GM12878 (cell line): ENCODE measurements at regions of chr9 and their contacts with region 1.

Region 1: GRCh38 chr9:89318123-89319014 is at the start of gene SECISBP2:
- DNase-seq: peak; percentile 79
- ATAC-seq: peak; percentile 92
- H3K4me3 ChIP-seq: peak within 1 kb of the TSS; percentile 74
- H3K27ac ChIP-seq: peak within 1 kb of the TSS; percentile 98
- H3K4me1 ChIP-seq: peaks cover 8% of the 10 kb centered on the region
- H3K27me3 ChIP-seq: no peaks in the 10 kb centered on the region
- CTCF ChIP-seq: peak; percentile 63 to 74 (median 72); a peak in 5 of 6 replicates
- EP300 ChIP-seq: peak; percentile 9 to 14; a peak in 2 of 4 replicates
- POLR2A ChIP-seq: peak; percentile 97
- RAD21 ChIP-seq: no peak; the same call in 1 of the 2 replicates
- polyA plus RNA-seq, gene SECISBP2: 4.6 to 6.6 TPM

Region 2: GRCh38 chr9:89340332-89340731 is 22.0 kb after region 1 on chr9:
- CTCF ChIA-PET with region 1: interaction called, 7 read pairs
- POLR2A ChIA-PET with region 1: interaction called, 4 read pairs
- RAD21 ChIA-PET with region 1: interaction called, 4 read pairs
- SMC1A ChIA-PET with region 1: interaction called, 20 read pairs
- in situ Hi-C with region 1: no loop called
- intact Hi-C with region 1: loop called (anchors 2 kb)
- DNase-seq: peak; percentile 45
- ATAC-seq: peak; percentile 97
- H3K4me3 ChIP-seq: peak overlapping the region; percentile 37; the same call in 1 of the 2 replicates
- H3K27ac ChIP-seq: peak overlapping the region; percentile 85
- H3K4me1 ChIP-seq: peaks cover 22% of the 10 kb centered on the region
- H3K27me3 ChIP-seq: no peaks in the 10 kb centered on the region
- CTCF ChIP-seq: no peak
- EP300 ChIP-seq: no peak
- POLR2A ChIP-seq: no peak
- RAD21 ChIP-seq: no peak

Region 3: GRCh38 chr9:89466451-89467277 is 148.3 kb after region 1 on chr9:
- CTCF ChIA-PET with region 1: no interaction called
- POLR2A ChIA-PET with region 1: no interaction called
- RAD21 ChIA-PET with region 1: no interaction called
- SMC1A ChIA-PET with region 1: interaction called, 4 read pairs
- in situ Hi-C with region 1: no loop called
- intact Hi-C with region 1: loop called (anchors 1 kb)
- DNase-seq: peak; percentile 83
- ATAC-seq: peak; percentile 74
- H3K4me3 ChIP-seq: peak overlapping the region; percentile 55; the same call in 1 of the 2 replicates
- H3K27ac ChIP-seq: peak overlapping the region; percentile 99
- H3K4me1 ChIP-seq: peaks cover 88% of the 10 kb centered on the region
- H3K27me3 ChIP-seq: no peaks in the 10 kb centered on the region
- CTCF ChIP-seq: no peak
- EP300 ChIP-seq: peak; percentile 42 to 48; a peak in 1 of 4 replicates
- POLR2A ChIP-seq: 0 out of 2 replicates have a peak, but pooled peaks have one; percentile 31
- RAD21 ChIP-seq: no peak

Region 4: DNA sequence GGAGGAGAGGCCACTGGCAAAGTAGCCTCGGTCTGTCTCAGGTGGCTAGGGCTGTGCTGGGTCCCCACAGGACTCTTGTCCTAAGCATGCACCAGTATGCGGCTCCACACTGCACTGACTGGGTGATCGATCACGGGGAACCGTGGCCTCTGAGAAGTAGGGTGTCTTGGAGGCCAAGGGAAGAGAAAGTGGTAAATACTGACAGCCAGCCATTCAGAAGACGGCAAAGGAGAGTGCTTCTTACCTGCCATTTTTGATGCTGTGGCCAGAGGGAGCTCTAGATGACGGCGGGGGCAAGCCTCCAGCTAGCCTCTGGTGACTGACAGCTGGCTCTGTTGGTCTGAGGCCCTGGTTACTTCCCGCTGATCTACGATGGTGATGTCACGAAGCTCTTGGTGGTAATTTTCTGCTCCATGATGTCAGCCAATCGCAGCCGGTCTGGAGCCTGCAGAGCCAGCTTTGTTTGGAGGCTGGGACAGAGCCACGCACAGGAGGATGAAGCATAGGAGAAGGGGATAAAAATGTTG is 246.0 kb after region 1 on chr9:
- CTCF ChIA-PET with region 1: no interaction called
- POLR2A ChIA-PET with region 1: no interaction called
- RAD21 ChIA-PET with region 1: no interaction called
- SMC1A ChIA-PET with region 1: no interaction called
- in situ Hi-C with region 1: no loop called
- intact Hi-C with region 1: loop called (anchors 5 kb)
- DNase-seq: no peak
- ATAC-seq: peak; percentile 98
- H3K4me3 ChIP-seq: no peak overlapping the region
- H3K27ac ChIP-seq: no peak overlapping the region
- H3K4me1 ChIP-seq: peaks cover 6% of the 10 kb centered on the region; the same call in 1 of the 2 replicates
- H3K27me3 ChIP-seq: no peaks in the 10 kb centered on the region
- CTCF ChIP-seq: peak; percentile 46 to 50 (median 50)
- EP300 ChIP-seq: no peak
- POLR2A ChIP-seq: no peak
- RAD21 ChIP-seq: peak; percentile 21; the same call in 1 of the 2 replicates